H1 (cell line): ENCODE measurements at regions of chr3 and their contacts with region 1.

Region 1: GRCh38 chr3:188954590-188955208 is 217.1 kb upstream of the TPRG1 start:
- DNase-seq: peak; percentile 56 to 88
- H3K4me3 ChIP-seq: no peak overlapping the region
- H3K27ac ChIP-seq: no peak overlapping the region
- H3K4me1 ChIP-seq: no peaks in the 10 kb centered on the region
- H3K27me3 ChIP-seq: no peaks in the 10 kb centered on the region
- CTCF ChIP-seq: peak; percentile 83 to 98 (median 93)
- EP300 ChIP-seq: no peak
- POLR2A ChIP-seq: no peak
- RAD21 ChIP-seq: peak; percentile 100

Region 2: DNA sequence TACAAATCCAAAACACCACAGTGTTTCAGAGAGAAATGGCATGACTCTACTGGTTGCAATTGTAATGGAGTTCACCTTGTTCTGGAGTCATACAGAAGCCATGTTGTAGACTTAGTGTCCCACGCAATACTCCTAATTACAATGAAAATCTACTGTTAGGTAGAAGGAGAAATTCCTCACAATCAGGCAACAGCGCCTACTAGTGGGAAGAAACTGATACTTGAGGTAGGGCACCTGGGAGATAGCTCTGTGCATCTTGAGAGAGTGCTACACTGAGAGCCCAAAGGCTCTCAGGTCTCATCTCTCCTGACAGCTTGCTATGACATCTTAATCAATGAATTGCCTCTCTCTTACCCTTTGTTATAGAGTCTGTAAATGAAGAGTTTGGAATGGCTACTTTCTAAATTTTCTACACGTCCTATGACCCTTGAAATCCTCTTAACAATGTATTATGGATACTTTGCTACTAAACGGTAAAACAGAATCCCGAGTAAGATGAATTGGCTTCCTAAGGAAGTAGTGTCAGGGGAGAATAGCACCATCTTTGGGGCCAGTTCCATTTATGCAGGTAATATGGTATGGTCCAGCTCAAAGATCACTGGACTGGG is 205.6 kb before region 1 on chr3:
- CTCF ChIA-PET with region 1: interaction called, 26 read pairs
- POLR2A ChIA-PET with region 1: no interaction called
- DNase-seq: peak in 1 of 2 experiments; percentile 68
- H3K4me3 ChIP-seq: no peak overlapping the region
- H3K27ac ChIP-seq: no peak overlapping the region
- H3K4me1 ChIP-seq: peaks cover 0 to 2% (median 0%) of the 10 kb centered on the region in 4 experiments; a peak in 1 of 7 replicates
- H3K27me3 ChIP-seq: no peaks in the 10 kb centered on the region
- CTCF ChIP-seq: peak; percentile 7 to 94 (median 72)
- EP300 ChIP-seq: no peak
- POLR2A ChIP-seq: no peak
- RAD21 ChIP-seq: peak; percentile 79 to 81

Region 3: DNA sequence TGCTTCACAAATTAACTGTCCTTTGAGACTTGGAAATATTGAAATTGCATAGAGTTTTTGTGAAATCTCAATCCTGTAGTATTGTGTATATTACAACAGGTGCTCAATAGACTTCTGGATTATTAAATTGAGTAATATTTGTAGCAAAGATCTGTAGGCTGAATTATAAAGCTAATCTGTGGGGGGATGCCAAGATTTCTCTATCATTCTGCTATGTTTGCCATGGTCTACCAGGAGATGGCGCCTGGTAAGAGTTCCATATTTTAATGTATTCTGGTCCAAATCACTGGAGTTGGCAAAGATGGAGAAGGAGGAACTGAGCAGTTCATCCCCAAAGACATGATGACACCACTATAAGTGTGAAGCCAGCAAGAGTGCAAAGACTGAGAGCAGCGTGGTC is 123.8 kb before region 1 on chr3:
- CTCF ChIA-PET with region 1: interaction called, 65 read pairs
- POLR2A ChIA-PET with region 1: no interaction called
- DNase-seq: no peak
- H3K4me3 ChIP-seq: no peak overlapping the region
- H3K27ac ChIP-seq: no peak overlapping the region
- H3K4me1 ChIP-seq: no peaks in the 10 kb centered on the region
- H3K27me3 ChIP-seq: no peaks in the 10 kb centered on the region
- CTCF ChIP-seq: peak in 2 of 3 experiments; percentile 43 to 44; a peak in 3 of 4 replicates
- EP300 ChIP-seq: no peak
- POLR2A ChIP-seq: no peak
- RAD21 ChIP-seq: peak; percentile 29 to 38; a peak in 3 of 4 replicates

Region 4: DNA sequence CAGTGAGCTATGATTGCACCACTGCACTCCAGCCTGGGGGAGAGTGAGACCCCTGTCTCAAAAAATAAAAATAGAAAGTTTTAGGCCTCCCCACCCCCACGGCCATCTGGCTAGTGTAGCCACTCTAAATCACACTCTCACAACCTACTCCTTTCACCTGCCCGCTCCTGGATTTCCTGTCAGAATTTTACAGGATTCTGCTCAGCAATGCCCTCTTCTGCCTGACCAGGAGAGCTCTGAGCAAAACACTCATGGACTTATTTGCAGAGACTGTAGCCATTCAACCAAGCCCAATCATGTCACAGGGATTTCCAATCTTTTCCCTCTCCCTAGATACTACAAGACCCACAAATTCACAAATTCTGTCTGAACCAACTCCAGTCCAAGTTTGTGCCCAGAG is 25.6 kb before region 1 on chr3:
- CTCF ChIA-PET with region 1: interaction called, 71 read pairs
- POLR2A ChIA-PET with region 1: interaction called, 4 read pairs
- DNase-seq: no peak
- H3K4me3 ChIP-seq: no peak overlapping the region
- H3K27ac ChIP-seq: no peak overlapping the region
- H3K4me1 ChIP-seq: no peaks in the 10 kb centered on the region
- H3K27me3 ChIP-seq: no peaks in the 10 kb centered on the region
- CTCF ChIP-seq: peak in 2 of 3 experiments; percentile 33 to 46; a peak in 3 of 4 replicates
- EP300 ChIP-seq: no peak
- POLR2A ChIP-seq: no peak
- RAD21 ChIP-seq: peak; percentile 27 to 57; a peak in 3 of 4 replicates

Region 5: GRCh38 chr3:188974856-188975599 is 20.3 kb after region 1 on chr3:
- CTCF ChIA-PET with region 1: interaction called, 27 read pairs
- POLR2A ChIA-PET with region 1: no interaction called
- DNase-seq: no peak
- H3K4me3 ChIP-seq: no peak overlapping the region
- H3K27ac ChIP-seq: no peak overlapping the region
- H3K4me1 ChIP-seq: no peaks in the 10 kb centered on the region; a peak in 1 of 7 replicates
- H3K27me3 ChIP-seq: no peaks in the 10 kb centered on the region
- CTCF ChIP-seq: no peak
- EP300 ChIP-seq: no peak
- POLR2A ChIP-seq: no peak
- RAD21 ChIP-seq: no peak

Region 6: GRCh38 chr3:189139611-189139940 is 184.9 kb after region 1 on chr3:
- CTCF ChIA-PET with region 1: interaction called, 15 read pairs
- POLR2A ChIA-PET with region 1: no interaction called
- DNase-seq: no peak
- H3K4me3 ChIP-seq: no peak overlapping the region
- H3K27ac ChIP-seq: no peak overlapping the region
- H3K4me1 ChIP-seq: no peaks in the 10 kb centered on the region; a peak in 1 of 7 replicates
- H3K27me3 ChIP-seq: no peaks in the 10 kb centered on the region; a peak in 1 of 7 replicates
- CTCF ChIP-seq: no peak
- EP300 ChIP-seq: no peak
- POLR2A ChIP-seq: no peak
- RAD21 ChIP-seq: no peak